Adrenal gland (tissue), 19 donors: ENCODE measurements at regions of chr3 and their contacts with region 1.

Region 1: GRCh38 chr3:63130406-63131024 is 147.6 kb upstream of the SYNPR start:
- DNase-seq: no peak
- H3K4me3 ChIP-seq: no peak overlapping the region
- H3K27ac ChIP-seq: no peak overlapping the region
- H3K4me1 ChIP-seq: no peaks in the 10 kb centered on the region
- H3K27me3 ChIP-seq: no peaks in the 10 kb centered on the region
- CTCF ChIP-seq: no peak
- POLR2A ChIP-seq: no peak

Region 2: DNA sequence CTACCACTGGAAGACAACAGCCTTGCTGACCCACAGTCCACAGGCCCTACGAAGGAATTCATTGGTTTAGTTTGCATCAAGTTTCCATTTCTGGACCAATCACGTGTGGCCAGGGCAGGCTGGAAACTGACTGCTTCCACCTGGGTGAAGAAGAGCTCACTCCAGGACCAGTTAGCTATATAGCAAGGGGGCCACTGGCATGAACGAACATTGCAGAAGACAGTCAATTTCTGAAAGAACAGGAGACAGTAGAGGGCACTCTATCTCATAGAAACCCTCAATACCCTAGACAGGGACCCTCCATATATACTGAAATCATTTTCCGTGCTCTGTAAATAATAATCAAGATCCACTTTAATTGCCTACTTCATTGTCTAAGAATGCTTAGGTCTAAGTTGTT is 470.9 kb before region 1 on chr3:
- intact Hi-C with region 1: loop called in 1 of 2 experiments (anchors 5 kb)
- DNase-seq: no peak
- H3K4me3 ChIP-seq: no peak overlapping the region
- H3K27ac ChIP-seq: no peak overlapping the region
- H3K4me1 ChIP-seq: peaks cover 0 to 6% of the 10 kb centered on the region in 2 donors
- H3K27me3 ChIP-seq: no peaks in the 10 kb centered on the region
- CTCF ChIP-seq: no peak
- POLR2A ChIP-seq: no peak

Region 3: DNA sequence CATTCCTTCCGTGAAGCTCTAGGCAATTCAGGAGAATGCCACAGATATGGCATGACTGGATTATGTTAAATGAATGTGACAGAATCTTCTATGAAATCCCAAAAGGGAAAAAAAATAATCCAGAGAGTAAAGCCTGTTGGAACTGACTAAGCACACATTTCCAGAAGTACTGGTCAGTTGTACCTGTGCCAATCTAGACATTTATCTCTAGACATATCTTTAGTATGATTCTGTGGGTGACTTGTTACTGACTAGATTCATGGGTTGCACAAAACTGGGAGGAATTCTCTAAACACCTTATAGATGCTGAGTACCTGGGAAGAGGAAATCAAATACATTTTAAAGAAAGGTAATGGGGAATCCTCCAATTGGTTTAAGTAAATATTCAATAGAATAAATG is 223.8 kb before region 1 on chr3:
- intact Hi-C with region 1: no loop called
- DNase-seq: no peak
- H3K4me3 ChIP-seq: no peak overlapping the region
- H3K27ac ChIP-seq: no peak overlapping the region
- H3K4me1 ChIP-seq: no peaks in the 10 kb centered on the region
- H3K27me3 ChIP-seq: no peaks in the 10 kb centered on the region
- CTCF ChIP-seq: no peak
- POLR2A ChIP-seq: no peak